PC-9 (cell line): ENCODE measurements at regions of chr1 and their contacts with region 1.

Region 1: DNA sequence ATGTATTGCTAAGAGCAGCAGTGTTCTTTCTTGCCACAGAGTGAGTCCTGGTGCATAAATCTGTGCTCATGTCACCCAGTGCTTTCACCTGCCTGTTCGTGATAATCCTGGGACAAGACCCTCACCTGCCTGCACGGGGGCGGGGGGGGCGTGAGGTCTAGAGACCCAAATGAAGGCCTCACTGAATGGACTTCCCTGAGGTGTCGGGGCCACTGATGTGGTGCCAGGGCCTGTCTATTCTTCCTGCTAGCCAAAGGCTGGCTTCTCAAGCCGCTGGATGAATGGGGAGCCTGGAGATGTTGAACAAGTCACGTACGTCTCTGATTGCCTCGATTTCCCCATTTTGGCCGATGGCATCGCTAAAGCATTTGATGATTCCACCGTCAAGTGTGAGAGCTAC is 118.8 kb upstream of the IRF2BP2 start:
- DNase-seq: no peak
- H3K4me3 ChIP-seq: no peak overlapping the region
- H3K27ac ChIP-seq: no peak overlapping the region
- H3K4me1 ChIP-seq: peaks cover 68% of the 10 kb centered on the region
- H3K27me3 ChIP-seq: no peaks in the 10 kb centered on the region
- CTCF ChIP-seq: no peak

Region 2: GRCh38 chr1:234676103-234676594 is 52.6 kb before region 1 on chr1:
- CTCF ChIA-PET with region 1: no interaction called
- POLR2A ChIA-PET with region 1: no interaction called
- intact Hi-C with region 1: no loop called
- DNase-seq: no peak
- H3K4me3 ChIP-seq: no peak overlapping the region
- H3K27ac ChIP-seq: no peak overlapping the region
- H3K4me1 ChIP-seq: peaks cover 11% of the 10 kb centered on the region; the same call in 1 of the 2 replicates
- H3K27me3 ChIP-seq: no peaks in the 10 kb centered on the region
- CTCF ChIP-seq: no peak

Region 3: DNA sequence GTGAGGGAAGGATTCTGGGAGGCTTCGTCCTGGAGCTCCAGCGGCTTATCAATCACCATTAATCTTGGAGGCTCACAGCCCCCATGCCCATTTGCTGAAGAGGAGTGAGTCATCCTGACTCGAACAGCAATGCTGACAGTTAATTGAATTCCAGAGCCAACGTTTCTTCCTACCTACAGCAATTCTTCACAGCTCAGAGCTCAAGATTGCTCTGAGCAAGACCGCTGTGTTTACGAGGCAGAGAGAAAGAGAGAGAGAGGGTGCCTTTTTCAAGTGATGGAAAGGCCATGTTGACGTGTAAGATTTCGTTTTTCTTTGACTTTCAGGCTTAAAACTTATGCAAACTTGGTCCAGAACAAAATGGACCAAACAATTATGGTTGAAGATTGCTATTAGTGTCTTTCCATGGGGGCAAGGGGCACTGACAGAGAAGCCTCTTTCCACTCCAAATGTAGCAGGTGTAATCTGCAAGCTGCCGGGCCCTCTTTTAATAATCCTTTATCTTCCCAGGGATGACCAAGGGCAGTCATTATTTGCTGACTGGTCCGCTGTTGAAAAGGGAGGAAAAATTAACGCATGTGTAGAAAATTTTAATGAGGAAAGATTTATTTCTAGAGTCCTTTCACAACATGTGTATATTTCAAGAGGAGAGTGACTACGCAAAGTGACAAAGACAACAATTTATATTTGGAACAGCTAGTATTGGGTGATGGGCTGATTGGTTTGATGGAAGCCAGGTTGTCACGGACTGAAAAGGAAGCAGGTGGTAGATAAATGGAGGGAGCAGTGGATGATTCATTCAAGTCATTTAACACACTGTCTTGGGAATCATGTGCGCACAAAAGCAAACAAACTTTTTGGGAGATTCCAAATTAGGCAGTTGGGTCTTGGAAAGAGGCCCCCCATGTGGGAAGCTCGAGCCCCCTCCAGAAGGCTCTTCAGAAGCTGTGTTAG is 17.4 kb after region 1 on chr1:
- CTCF ChIA-PET with region 1: interaction called, 12 read pairs
- POLR2A ChIA-PET with region 1: no interaction called
- intact Hi-C with region 1: loop called (anchors 1 kb)
- DNase-seq: peak in 1 of 2 experiments; percentile 79
- H3K4me3 ChIP-seq: no peak overlapping the region
- H3K27ac ChIP-seq: peak overlapping the region; percentile 82
- H3K4me1 ChIP-seq: peaks cover 45% of the 10 kb centered on the region
- H3K27me3 ChIP-seq: no peaks in the 10 kb centered on the region
- CTCF ChIP-seq: no peak

Region 4: GRCh38 chr1:234778221-234779159 is 49.8 kb after region 1 on chr1:
- CTCF ChIA-PET with region 1: no interaction called
- POLR2A ChIA-PET with region 1: no interaction called
- intact Hi-C with region 1: no loop called
- DNase-seq: no peak
- H3K4me3 ChIP-seq: no peak overlapping the region
- H3K27ac ChIP-seq: no peak overlapping the region
- H3K4me1 ChIP-seq: no peaks in the 10 kb centered on the region
- H3K27me3 ChIP-seq: no peaks in the 10 kb centered on the region
- CTCF ChIP-seq: no peak